T-cell (primary cell): ENCODE measurements at regions of chr9 and their contacts with region 1.

Region 1: DNA sequence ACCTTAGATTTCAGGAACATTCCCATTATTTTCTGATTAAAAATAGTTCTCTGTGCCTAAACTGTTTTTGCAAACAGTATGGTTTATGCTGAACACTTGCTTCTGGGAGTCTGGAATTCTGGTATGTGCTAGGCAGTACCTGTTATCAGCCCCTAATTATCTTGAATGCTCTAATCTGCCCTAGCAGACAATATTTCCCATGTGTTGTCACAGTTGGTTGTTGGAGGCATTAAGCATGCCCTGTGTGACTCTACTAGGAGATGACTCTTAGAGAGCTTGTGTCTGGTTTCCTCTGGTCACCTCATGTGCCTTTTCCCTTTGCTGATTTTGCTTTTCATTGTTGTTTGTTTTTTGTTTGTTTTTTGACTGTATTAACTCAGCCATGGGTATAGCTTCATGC is 36.6 kb downstream of the UHRF2 start:
- DNase-seq: no peak
- ATAC-seq: peak in 1 of 4 experiments; percentile 27
- H3K4me3 ChIP-seq: no peak overlapping the region
- H3K4me3 Mint-ChIP-seq: peak overlapping the region in 1 of 3 donors; percentile 11
- H3K27ac ChIP-seq: no peak overlapping the region
- H3K27ac Mint-ChIP-seq: no peak overlapping the region
- H3K4me1 ChIP-seq: peaks cover 3 to 6% of the 10 kb centered on the region in 2 experiments
- H3K4me1 Mint-ChIP-seq: peaks cover 71 to 74% (median 73%) of the 10 kb centered on the region in 3 donors
- H3K27me3 ChIP-seq: no peaks in the 10 kb centered on the region
- H3K27me3 Mint-ChIP-seq: no peaks in the 10 kb centered on the region

Region 2: DNA sequence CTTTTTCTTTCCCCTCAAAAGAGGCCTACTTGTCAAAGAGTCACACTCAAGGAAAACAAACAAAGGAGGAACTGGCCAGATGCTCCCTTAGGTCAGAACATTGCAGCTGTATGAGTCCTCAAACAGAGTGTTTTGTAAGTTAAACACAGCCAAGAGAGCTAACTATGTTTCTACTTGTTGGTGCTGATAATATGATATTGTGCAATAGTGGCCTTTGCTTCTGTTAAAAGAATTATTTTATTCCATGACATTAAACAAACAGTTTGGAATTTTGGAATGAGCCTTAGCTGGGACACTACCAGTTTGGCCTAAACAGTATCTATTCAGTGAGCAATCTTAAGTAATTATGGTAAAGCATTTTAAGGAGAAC is 177.4 kb before region 1 on chr9:
- CTCF ChIA-PET with region 1: no interaction called
- POLR2A ChIA-PET with region 1: no interaction called
- DNase-seq: no peak
- ATAC-seq: no peak
- H3K4me3 ChIP-seq: no peak overlapping the region
- H3K4me3 Mint-ChIP-seq: no peak overlapping the region
- H3K27ac ChIP-seq: no peak overlapping the region
- H3K27ac Mint-ChIP-seq: no peak overlapping the region
- H3K4me1 ChIP-seq: no peaks in the 10 kb centered on the region
- H3K4me1 Mint-ChIP-seq: no peaks in the 10 kb centered on the region
- H3K27me3 ChIP-seq: peaks cover 0 to 10% of the 10 kb centered on the region in 2 experiments
- H3K27me3 Mint-ChIP-seq: peaks cover 9 to 15% of the 10 kb centered on the region in 2 donors

Region 3: GRCh38 chr9:6334305-6334704 is 115.3 kb before region 1 on chr9:
- CTCF ChIA-PET with region 1: no interaction called
- POLR2A ChIA-PET with region 1: no interaction called
- DNase-seq: no peak
- ATAC-seq: no peak
- H3K4me3 ChIP-seq: no peak overlapping the region
- H3K4me3 Mint-ChIP-seq: no peak overlapping the region
- H3K27ac ChIP-seq: no peak overlapping the region
- H3K27ac Mint-ChIP-seq: no peak overlapping the region
- H3K4me1 ChIP-seq: no peaks in the 10 kb centered on the region
- H3K4me1 Mint-ChIP-seq: no peaks in the 10 kb centered on the region
- H3K27me3 ChIP-seq: peaks cover 0 to 7% of the 10 kb centered on the region in 2 experiments
- H3K27me3 Mint-ChIP-seq: peaks cover 39 to 47% of the 10 kb centered on the region in 2 donors

Region 4: DNA sequence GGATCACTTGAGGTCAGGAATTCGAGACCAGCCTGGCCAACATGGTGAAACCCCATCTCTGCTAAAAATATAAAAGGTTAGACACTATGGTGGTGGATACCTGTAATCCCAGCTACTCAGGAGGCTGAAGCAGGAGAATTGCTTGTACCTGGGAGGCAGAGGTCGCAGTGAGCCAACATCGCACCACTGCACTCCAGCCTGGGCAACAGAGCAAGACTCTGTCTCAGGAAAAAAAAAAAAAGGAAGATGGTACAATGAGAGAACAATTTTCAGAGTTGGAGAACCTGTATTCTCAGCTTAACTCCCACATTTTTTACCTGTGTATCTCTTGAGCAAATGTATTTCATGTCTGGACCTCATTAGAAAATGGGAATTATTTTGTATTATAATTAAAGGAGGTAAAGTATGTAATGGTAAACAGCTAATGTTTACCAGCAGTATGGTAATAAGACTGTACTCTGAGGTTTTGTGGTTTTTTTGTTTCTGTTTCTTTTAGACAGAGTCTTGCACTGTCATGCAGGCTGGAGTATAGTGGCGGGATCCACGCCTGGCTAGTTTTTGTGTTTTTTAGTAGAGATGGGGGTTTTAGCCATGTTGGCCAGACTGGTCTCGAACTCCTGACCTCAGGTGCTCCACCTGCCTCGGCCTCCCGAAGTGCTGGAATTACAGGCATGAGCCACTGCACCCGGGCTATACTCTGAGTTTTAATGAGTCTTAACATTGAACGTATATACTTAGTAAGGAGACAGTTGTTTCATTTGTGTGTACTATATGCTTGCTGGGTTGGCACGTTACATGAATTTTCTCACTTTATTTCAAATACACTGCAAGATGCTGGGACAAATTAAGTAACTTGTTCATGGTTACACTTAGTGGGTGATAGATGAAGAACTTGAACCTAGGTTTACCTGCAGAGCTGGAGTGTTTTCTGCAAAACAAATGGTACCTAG is 20.4 kb before region 1 on chr9:
- CTCF ChIA-PET with region 1: no interaction called
- POLR2A ChIA-PET with region 1: no interaction called
- DNase-seq: peak in 2 of 35 experiments; percentile 20 to 45
- ATAC-seq: peak; percentile 73 to 83 (median 74)
- H3K4me3 ChIP-seq: no peak overlapping the region
- H3K4me3 Mint-ChIP-seq: peak overlapping the region; percentile 47 to 59 (median 58)
- H3K27ac ChIP-seq: peak overlapping the region; percentile 47
- H3K27ac Mint-ChIP-seq: peak overlapping the region; percentile 79 to 85
- H3K4me1 ChIP-seq: peaks cover 14 to 30% of the 10 kb centered on the region in 2 experiments
- H3K4me1 Mint-ChIP-seq: peaks cover 82 to 88% (median 85%) of the 10 kb centered on the region in 3 donors
- H3K27me3 ChIP-seq: no peaks in the 10 kb centered on the region
- H3K27me3 Mint-ChIP-seq: no peaks in the 10 kb centered on the region

Region 5: GRCh38 chr9:6473149-6473548 is 23.5 kb after region 1 on chr9:
- CTCF ChIA-PET with region 1: interaction called in 1 of 2 experiments, 15 read pairs
- POLR2A ChIA-PET with region 1: no interaction called
- DNase-seq: no peak
- ATAC-seq: no peak
- H3K4me3 ChIP-seq: no peak overlapping the region
- H3K4me3 Mint-ChIP-seq: no peak overlapping the region
- H3K27ac ChIP-seq: no peak overlapping the region
- H3K27ac Mint-ChIP-seq: no peak overlapping the region
- H3K4me1 ChIP-seq: no peaks in the 10 kb centered on the region
- H3K4me1 Mint-ChIP-seq: peaks cover 16 to 19% (median 16%) of the 10 kb centered on the region in 3 donors
- H3K27me3 ChIP-seq: no peaks in the 10 kb centered on the region
- H3K27me3 Mint-ChIP-seq: no peaks in the 10 kb centered on the region

Region 6: GRCh38 chr9:6852243-6852963 is 402.8 kb after region 1 on chr9:
- CTCF ChIA-PET with region 1: no interaction called
- POLR2A ChIA-PET with region 1: no interaction called
- DNase-seq: no peak
- ATAC-seq: no peak
- H3K4me3 ChIP-seq: no peak overlapping the region
- H3K4me3 Mint-ChIP-seq: no peak overlapping the region
- H3K27ac ChIP-seq: no peak overlapping the region
- H3K27ac Mint-ChIP-seq: no peak overlapping the region
- H3K4me1 ChIP-seq: no peaks in the 10 kb centered on the region
- H3K4me1 Mint-ChIP-seq: peaks cover 4 to 10% (median 6%) of the 10 kb centered on the region in 3 donors
- H3K27me3 ChIP-seq: no peaks in the 10 kb centered on the region
- H3K27me3 Mint-ChIP-seq: no peaks in the 10 kb centered on the region